Adrenal gland (tissue), 19 donors: ENCODE measurements at regions of chr10 and their contacts with region 1.

Region 1: GRCh38 chr10:100046021-100046486 is 35.6 kb downstream of the CPN1 start:
- DNase-seq: peak; percentile 82 to 96 (median 92)
- H3K4me3 ChIP-seq: no peak overlapping the region
- H3K27ac ChIP-seq: no peak overlapping the region
- H3K4me1 ChIP-seq: peaks cover 0 to 14% of the 10 kb centered on the region in 2 donors
- H3K27me3 ChIP-seq: no peaks in the 10 kb centered on the region
- CTCF ChIP-seq: peak; percentile 87 to 99 (median 94)
- POLR2A ChIP-seq: no peak

Region 2: DNA sequence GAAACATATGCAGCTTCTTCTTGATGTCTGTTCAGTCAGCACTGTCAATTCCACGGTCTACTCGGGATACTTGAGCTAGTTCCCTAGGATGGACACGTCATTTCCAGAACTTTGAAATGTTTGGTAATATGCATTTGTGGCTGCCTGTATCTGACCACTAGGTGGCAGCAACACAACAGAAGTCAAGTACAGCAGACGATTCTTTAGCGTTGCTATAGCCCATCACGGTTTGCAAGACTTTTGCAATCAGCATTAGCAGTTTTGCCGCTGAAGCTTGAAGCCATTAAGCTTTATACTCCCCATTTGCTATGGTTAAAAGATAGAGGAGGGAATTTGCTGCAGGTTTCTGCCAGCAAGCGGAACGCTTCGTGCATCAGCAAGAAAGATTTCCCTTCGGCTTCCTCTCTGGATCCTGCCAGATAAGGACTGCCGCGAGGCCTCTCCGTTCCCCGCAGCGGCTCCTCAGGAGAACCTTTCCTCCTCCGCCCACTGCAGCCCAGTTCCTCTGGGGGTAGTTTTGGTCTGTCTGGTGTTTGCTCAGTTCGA is 200.1 kb before region 1 on chr10:
- intact Hi-C with region 1: loop called (anchors 5 kb)
- DNase-seq: peak; percentile 77 to 94 (median 79)
- H3K4me3 ChIP-seq: peak overlapping the region in 1 of 4 donors; percentile 48
- H3K27ac ChIP-seq: peak overlapping the region in 1 of 5 donors; percentile 6
- H3K4me1 ChIP-seq: peaks cover 0 to 6% of the 10 kb centered on the region in 2 donors
- H3K27me3 ChIP-seq: no peaks in the 10 kb centered on the region
- CTCF ChIP-seq: peak; percentile 94 to 98 (median 96)
- POLR2A ChIP-seq: no peak

Region 3: DNA sequence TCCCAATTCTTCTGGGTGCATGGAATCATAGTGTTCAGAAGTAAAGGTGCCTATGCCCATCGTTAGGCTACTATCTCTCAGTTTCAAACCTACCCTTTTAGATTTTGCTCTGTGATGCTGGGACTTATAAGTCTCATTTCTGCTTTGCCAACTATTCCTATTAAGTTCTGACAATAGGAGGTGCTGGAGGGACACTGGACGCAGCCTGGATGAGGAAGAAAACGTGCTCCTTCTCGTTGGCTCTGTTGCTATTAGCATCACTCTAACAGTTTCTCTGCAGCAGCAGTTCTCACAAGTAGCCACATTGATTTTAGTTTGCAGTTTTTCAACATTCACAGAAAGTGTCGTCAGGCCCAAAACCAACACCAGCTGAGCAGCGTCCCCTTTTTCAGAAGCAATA is 191.2 kb before region 1 on chr10:
- intact Hi-C with region 1: loop called in 1 of 2 experiments (anchors 5 kb)
- DNase-seq: peak in 2 of 7 donors; percentile 16 to 59
- H3K4me3 ChIP-seq: no peak overlapping the region
- H3K27ac ChIP-seq: no peak overlapping the region
- H3K4me1 ChIP-seq: no peaks in the 10 kb centered on the region
- H3K27me3 ChIP-seq: no peaks in the 10 kb centered on the region
- CTCF ChIP-seq: peak in 4 of 6 experiments; percentile 23 to 40 (median 39)
- POLR2A ChIP-seq: no peak